ENCODE measurements at regions of chr20 and their contacts with region 1.

Region 1: DNA sequence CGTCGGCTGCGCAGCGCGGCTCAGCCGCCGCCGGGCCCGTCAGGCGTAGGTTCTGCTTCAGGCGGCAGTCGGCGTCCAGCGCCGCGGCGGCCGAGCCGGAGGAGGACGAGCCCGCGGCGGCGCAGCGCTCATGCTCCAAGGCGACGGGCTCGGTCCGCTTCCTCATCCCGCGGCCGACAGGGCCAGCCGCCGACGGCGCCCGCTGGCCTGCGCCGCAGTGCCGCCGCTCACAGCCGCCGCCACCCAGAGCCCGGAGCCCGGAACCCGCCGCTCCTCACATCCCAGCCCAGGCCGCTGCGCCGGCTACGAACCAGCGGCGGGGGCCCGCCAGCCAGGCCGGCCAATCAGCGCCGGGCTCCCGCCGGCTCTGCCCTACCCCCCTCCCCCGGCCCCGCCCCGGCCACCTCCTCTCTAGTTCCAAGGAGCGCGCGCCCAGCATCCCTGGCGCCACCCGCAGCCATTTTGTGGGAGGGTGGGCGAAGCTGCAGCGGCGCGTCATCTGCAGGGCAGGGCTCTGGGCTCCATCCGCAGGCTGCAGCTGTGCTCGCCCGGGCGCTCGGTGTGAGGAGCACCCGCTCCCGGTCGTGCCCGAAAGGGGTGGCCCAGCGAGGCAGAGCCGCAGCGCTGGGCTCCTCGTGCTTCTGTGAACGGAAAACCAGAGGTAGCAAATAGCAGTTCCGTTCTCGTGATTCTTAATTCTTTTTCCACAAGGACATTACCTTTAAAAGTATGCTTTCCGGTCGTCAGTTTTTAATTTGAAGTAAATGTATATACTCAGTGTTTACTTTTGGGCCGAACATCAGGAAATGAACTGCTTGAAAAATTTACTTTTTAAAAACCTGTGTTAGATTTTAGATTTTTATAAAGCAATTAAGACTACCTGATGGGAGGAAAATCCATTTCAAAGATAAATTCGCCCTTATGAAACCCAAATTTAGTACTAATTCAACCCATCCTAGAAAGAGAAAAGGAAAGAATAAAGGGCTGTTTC is at the start of gene ABHD12:
- DNase-seq: peak; percentile 63
- H3K4me3 ChIP-seq: peak within 1 kb of the TSS; percentile 78 to 91 (median 81)
- H3K27ac ChIP-seq: peak within 1 kb of the TSS; percentile 86 to 98 (median 92)
- H3K4me1 ChIP-seq: peaks cover 0 to 21% (median 5%) of the 10 kb centered on the region in 3 donors
- H3K27me3 ChIP-seq: no peaks in the 10 kb centered on the region
- CTCF ChIP-seq: no peak
- POLR2A ChIP-seq: peak in 2 of 4 donors; percentile 80 to 91
- total RNA-seq, gene ABHD12: 23.8 to 62.1 (median 36.4) TPM

Region 2: DNA sequence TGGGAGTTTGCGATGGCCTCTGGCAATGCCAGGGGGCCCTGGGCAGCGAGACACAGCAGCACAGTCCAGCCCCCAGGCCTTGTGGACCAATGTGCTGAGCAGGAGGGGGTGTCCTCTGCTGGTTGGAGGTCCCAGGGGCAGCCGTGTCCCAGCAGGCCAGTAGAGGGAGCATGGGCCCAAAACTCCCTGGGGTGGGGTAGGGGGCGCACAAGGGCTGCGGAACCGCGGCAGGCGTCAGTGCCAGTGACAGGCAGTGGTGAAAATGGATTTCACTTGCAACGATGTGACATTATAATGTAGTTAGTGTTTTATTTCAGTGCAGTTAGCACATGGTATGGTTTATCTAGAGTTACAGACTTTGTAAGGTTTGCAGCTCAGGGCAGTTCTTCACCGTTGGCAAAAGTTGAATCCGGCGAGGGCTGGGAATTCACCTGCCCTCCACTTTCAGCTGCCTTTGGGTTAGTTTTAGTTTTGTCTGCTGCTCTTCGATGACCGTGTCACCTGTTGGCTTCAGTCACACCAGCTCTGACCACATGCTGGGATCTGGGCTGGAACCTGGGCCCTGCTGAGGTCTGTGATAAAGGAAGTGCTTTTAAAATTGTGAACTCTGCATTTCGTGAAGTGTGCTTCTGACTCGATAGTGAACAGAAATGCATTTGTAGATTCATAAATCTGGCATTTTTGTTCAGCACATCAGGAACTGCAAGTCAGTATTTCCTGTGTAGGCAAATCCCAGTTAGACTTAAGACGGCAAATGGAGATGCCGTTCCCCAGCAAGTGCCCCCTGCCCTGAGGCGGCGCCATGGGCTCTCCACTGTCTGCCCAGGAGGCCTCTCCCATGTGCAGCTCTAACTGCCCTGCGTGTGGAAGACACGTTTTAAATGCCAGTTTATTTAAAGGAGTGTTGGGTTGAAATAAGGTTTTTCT is 96.1 kb before region 1 on chr20:
- intact Hi-C with region 1: loop called (anchors 10 kb)
- DNase-seq: no peak
- H3K4me3 ChIP-seq: no peak overlapping the region
- H3K27ac ChIP-seq: peak overlapping the region; percentile 34 to 75 (median 58)
- H3K4me1 ChIP-seq: peaks cover 22 to 58% (median 42%) of the 10 kb centered on the region in 3 donors
- H3K27me3 ChIP-seq: no peaks in the 10 kb centered on the region
- CTCF ChIP-seq: peak; percentile 35 to 51 (median 48)
- POLR2A ChIP-seq: no peak

Measured in esophagus squamous epithelium (tissue), 5 donors.